Common myeloid progenitor, CD34-positive (primary cell): ENCODE measurements at regions of chr11 and their contacts with region 1.

Region 1: DNA sequence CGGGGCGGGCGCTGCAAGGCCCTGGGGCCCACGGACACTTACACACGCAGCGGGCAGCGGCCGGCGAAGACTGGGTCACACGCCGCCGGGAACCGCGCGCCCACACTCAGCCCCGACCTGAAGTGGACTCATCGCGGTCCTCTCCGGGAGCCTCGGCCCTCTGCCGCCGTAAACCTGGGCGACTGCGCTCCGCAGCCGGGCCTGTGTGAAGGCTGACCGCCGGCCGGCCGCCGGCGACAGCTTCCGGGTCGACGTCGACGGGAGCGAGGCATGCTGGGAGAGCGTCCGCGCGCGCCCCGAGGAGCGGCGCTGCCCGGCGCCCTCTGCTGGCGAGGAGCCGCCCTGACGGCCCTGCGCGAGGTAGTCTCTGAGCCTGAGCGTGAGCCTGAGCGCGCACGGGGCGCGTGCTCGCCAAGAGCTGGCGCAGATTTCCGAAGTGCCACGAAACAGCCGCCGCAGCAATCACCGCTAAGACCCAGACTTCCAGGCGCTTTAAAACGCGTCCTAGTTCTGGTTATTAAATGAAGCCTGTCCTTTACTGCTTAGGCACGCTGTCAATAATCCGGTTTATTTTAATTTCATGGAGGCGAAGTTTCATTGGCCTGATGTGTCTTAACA is at the start of gene SNX19:
- DNase-seq: peak; percentile 88 to 93 (median 93)
- H3K4me3 ChIP-seq: peak within 1 kb of the TSS; percentile 58 to 97 (median 84)
- H3K27ac ChIP-seq: peak within 1 kb of the TSS; percentile 89 to 95
- H3K4me1 ChIP-seq: peaks cover 3 to 18% (median 11%) of the 10 kb centered on the region in 4 experiments
- H3K27me3 ChIP-seq: peaks cover 0 to 6% (median 0%) of the 10 kb centered on the region in 5 experiments

Region 2: GRCh38 chr11:130894322-130895025 is 21.9 kb before region 1 on chr11:
- CTCF ChIA-PET with region 1: interaction called, 78 read pairs
- POLR2A ChIA-PET with region 1: no interaction called
- DNase-seq: peak; percentile 55 to 81 (median 78)
- H3K4me3 ChIP-seq: no peak overlapping the region
- H3K27ac ChIP-seq: no peak overlapping the region
- H3K4me1 ChIP-seq: no peaks in the 10 kb centered on the region
- H3K27me3 ChIP-seq: no peaks in the 10 kb centered on the region